ENCODE measurements at regions of chr4 and their contacts with region 1.

Region 1: DNA sequence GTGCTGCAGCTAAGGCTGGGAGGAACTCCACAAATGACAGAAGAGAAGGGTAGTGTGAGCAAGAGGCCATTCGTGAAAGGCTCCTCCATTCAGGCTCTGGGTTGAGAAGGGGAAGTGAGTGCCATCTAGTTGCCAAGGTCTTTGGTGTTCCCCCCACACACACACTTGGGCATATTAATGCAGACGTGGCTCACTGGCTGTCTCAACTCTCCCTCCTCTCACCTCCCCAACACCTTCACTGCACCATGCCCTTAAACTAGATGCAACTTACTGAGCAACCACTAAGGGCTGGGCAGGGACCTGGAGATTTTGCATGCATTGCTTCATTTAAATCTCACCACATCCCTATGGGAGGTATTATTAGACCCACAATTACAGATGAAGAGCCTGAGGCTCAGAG is 8.7 kb downstream of the CLRN2 start:
- DNase-seq: peak in 2 of 3 donors; percentile 17 to 24
- H3K4me3 ChIP-seq: no peak overlapping the region
- H3K27ac ChIP-seq: no peak overlapping the region
- H3K4me1 ChIP-seq: no peaks in the 10 kb centered on the region
- H3K27me3 ChIP-seq: peaks cover 0 to 7% (median 0%) of the 10 kb centered on the region in 5 experiments

Region 2: GRCh38 chr4:17511950-17512795 is 11.5 kb before region 1 on chr4 and contains the start of gene QDPR:
- CTCF ChIA-PET with region 1: interaction called, 20 read pairs
- POLR2A ChIA-PET with region 1: no interaction called
- DNase-seq: peak; percentile 83 to 86 (median 84)
- H3K4me3 ChIP-seq: peak within 1 kb of the TSS; percentile 67 to 96 (median 82)
- H3K27ac ChIP-seq: peak within 1 kb of the TSS in 1 of 2 experiments; percentile 57
- H3K4me1 ChIP-seq: peaks cover 9 to 23% (median 19%) of the 10 kb centered on the region in 4 experiments
- H3K27me3 ChIP-seq: peaks cover 0 to 2% (median 0%) of the 10 kb centered on the region in 5 experiments